IMR-90 (cell line): ENCODE measurements at regions of chr2 and their contacts with region 1.

Region 1: DNA sequence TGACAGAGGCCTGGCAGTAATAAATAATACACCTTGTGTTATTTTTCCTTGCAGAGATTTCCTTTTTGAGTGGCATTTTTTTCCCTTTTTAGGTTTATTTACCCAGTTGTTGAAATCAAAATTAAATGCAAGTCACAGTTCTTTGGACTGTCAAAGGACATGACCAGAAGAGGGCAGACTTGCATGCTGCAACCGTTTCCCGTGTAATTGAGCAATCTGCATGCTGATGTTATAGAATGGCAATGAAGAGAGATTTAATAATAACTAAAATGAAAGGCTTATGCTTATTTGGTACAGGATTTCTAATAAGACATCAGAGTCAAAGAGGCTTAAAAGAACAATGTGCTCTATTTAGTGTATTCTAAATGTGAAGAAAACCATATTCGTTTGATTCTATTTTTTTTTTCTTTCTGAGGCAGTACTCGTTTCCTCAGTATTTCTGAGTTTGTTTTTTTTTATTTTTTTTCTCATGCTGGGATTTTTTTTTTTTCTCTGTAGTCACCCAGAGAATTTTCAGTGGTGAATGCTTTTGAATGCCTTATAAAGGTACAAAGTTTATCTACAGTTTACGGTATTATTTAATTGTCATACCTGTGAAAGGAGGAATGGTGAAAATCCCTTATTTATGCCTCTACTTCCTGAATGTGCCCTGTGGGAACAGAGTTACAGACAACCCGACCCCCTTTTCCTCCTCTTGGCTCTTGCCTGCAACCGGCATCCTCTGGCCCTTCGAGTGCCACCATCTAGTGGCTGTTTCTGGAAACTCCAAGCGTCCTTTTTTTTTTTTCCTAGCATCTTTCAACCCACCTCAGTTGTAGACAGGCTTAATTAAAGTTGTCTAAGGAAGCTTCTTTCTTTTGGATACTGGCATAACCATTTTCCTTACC is 368.5 kb downstream of the LRRTM1 start:
- DNase-seq: peak; percentile 84
- ATAC-seq: peak; percentile 92
- H3K4me3 ChIP-seq: no peak overlapping the region
- H3K27ac ChIP-seq: no peak overlapping the region
- H3K4me1 ChIP-seq: no peaks in the 10 kb centered on the region
- H3K27me3 ChIP-seq: peaks cover 3% of the 10 kb centered on the region
- CTCF ChIP-seq: peak; percentile 94
- POLR2A ChIP-seq: no peak
- RAD21 ChIP-seq: peak; percentile 86

Region 2: GRCh38 chr2:80054336-80054675 is 118.3 kb after region 1 on chr2:
- CTCF ChIA-PET with region 1: no interaction called
- POLR2A ChIA-PET with region 1: no interaction called
- dilution Hi-C with region 1: no loop called
- in situ Hi-C with region 1: no loop called
- intact Hi-C with region 1: loop called (anchors 5 kb)
- DNase-seq: peak; percentile 26
- ATAC-seq: peak; percentile 82
- H3K4me3 ChIP-seq: no peak overlapping the region
- H3K27ac ChIP-seq: no peak overlapping the region
- H3K4me1 ChIP-seq: peaks cover 5% of the 10 kb centered on the region
- H3K27me3 ChIP-seq: no peaks in the 10 kb centered on the region
- CTCF ChIP-seq: no peak
- POLR2A ChIP-seq: no peak
- RAD21 ChIP-seq: no peak

Region 3: DNA sequence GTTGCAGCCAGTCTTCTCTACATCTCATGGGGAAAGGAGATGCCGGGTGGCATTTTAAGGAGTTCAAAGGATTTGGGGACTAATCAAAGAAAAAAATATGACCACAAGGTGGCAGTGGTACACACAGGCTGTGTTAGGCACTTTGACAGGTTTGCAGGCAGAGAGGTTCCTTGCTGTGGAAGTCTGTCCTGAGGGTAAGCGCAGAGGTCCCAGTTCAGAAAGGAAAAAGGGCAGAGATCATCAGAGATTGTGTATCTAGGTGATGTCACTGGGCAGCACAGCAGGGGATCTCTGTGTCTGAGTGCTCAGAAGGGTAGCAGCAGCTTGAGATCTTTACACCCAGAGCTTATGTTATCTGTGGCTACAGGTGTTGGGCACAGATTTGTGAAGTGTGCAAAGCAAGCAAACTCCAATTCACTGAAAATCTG is 137.1 kb after region 1 on chr2:
- CTCF ChIA-PET with region 1: interaction called, 3 read pairs
- POLR2A ChIA-PET with region 1: no interaction called
- dilution Hi-C with region 1: no loop called
- in situ Hi-C with region 1: no loop called
- intact Hi-C with region 1: loop called (anchors 1 kb)
- DNase-seq: peak; percentile 73
- ATAC-seq: peak; percentile 67
- H3K4me3 ChIP-seq: no peak overlapping the region
- H3K27ac ChIP-seq: no peak overlapping the region
- H3K4me1 ChIP-seq: peaks cover 6% of the 10 kb centered on the region
- H3K27me3 ChIP-seq: no peaks in the 10 kb centered on the region
- CTCF ChIP-seq: peak; percentile 83
- POLR2A ChIP-seq: no peak
- RAD21 ChIP-seq: peak; percentile 91

Region 4: GRCh38 chr2:80217446-80217845 is 281.4 kb after region 1 on chr2:
- CTCF ChIA-PET with region 1: no interaction called
- POLR2A ChIA-PET with region 1: no interaction called
- dilution Hi-C with region 1: no loop called
- in situ Hi-C with region 1: no loop called
- intact Hi-C with region 1: no loop called
- DNase-seq: no peak
- ATAC-seq: no peak
- H3K4me3 ChIP-seq: no peak overlapping the region
- H3K27ac ChIP-seq: no peak overlapping the region
- H3K4me1 ChIP-seq: no peaks in the 10 kb centered on the region
- H3K27me3 ChIP-seq: no peaks in the 10 kb centered on the region
- CTCF ChIP-seq: no peak
- POLR2A ChIP-seq: no peak
- RAD21 ChIP-seq: no peak

Region 5: GRCh38 chr2:80238692-80239469 is 302.9 kb after region 1 on chr2:
- CTCF ChIA-PET with region 1: no interaction called
- POLR2A ChIA-PET with region 1: no interaction called
- dilution Hi-C with region 1: no loop called
- in situ Hi-C with region 1: loop called (anchors 10 kb)
- intact Hi-C with region 1: loop called (anchors 1 kb)
- DNase-seq: peak; percentile 42
- ATAC-seq: peak; percentile 85
- H3K4me3 ChIP-seq: no peak overlapping the region
- H3K27ac ChIP-seq: no peak overlapping the region
- H3K4me1 ChIP-seq: no peaks in the 10 kb centered on the region
- H3K27me3 ChIP-seq: peaks cover 2% of the 10 kb centered on the region
- CTCF ChIP-seq: peak; percentile 77
- POLR2A ChIP-seq: no peak
- RAD21 ChIP-seq: peak; percentile 70

Region 6: DNA sequence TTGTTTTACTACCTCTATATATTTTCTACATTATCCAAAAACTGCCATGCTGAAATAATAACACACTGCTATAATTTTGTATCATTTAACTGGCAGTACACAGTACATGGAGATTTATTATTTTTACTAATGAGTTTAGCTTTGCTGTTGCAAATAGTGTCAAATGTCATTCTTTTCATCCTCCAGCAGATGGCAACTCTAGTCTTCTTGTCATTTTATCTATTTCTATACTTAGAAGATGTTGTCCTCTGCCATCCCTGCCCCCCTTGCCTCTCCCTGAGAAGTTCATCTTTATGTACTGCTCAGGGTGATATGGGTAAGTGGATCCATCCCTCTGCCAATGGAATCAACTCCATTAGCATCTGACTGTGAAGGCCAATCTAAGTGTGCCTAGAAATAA is 390.2 kb after region 1 on chr2:
- CTCF ChIA-PET with region 1: no interaction called
- POLR2A ChIA-PET with region 1: no interaction called
- dilution Hi-C with region 1: no loop called
- in situ Hi-C with region 1: no loop called
- intact Hi-C with region 1: loop called (anchors 10 kb)
- DNase-seq: peak; percentile 19
- ATAC-seq: 0 out of 2 replicates have a peak, but pooled peaks have one; percentile 29
- H3K4me3 ChIP-seq: no peak overlapping the region
- H3K27ac ChIP-seq: no peak overlapping the region
- H3K4me1 ChIP-seq: no peaks in the 10 kb centered on the region
- H3K27me3 ChIP-seq: peaks cover 11% of the 10 kb centered on the region
- CTCF ChIP-seq: peak; percentile 40
- POLR2A ChIP-seq: no peak
- RAD21 ChIP-seq: peak; percentile 46

Region 7: DNA sequence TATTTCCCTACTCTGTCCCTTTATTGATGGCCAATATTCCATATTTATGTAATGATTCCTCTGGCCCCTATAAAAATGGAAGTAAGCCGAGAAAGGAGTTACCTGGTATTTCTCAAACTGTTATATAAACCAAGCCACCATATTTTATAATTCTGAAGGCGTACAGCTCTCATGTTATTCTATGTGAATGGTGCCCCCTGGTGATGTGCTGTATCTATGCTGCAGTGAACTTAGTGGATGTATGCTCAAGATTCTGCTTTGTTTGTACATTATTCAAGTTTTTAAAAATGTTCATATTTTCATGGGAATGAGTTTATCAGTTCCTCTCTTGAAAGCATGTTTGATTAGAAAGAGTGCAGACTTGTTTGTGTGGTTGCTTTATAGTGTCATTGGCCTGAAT is 563.1 kb after region 1 on chr2:
- CTCF ChIA-PET with region 1: interaction called, 3 read pairs
- POLR2A ChIA-PET with region 1: no interaction called
- dilution Hi-C with region 1: no loop called
- in situ Hi-C with region 1: loop called (anchors 10 kb)
- intact Hi-C with region 1: loop called (anchors 1 kb)
- DNase-seq: peak; percentile 65
- ATAC-seq: peak; percentile 72; the same call in 1 of the 2 replicates
- H3K4me3 ChIP-seq: no peak overlapping the region
- H3K27ac ChIP-seq: no peak overlapping the region
- H3K4me1 ChIP-seq: peaks cover 4% of the 10 kb centered on the region; the same call in 1 of the 2 replicates
- H3K27me3 ChIP-seq: no peaks in the 10 kb centered on the region
- CTCF ChIP-seq: peak; percentile 78
- POLR2A ChIP-seq: no peak
- RAD21 ChIP-seq: peak; percentile 76

Region 8: GRCh38 chr2:81644189-81644588 is 1708.2 kb after region 1 on chr2:
- CTCF ChIA-PET with region 1: no interaction called
- POLR2A ChIA-PET with region 1: no interaction called
- dilution Hi-C with region 1: no loop called
- in situ Hi-C with region 1: no loop called
- intact Hi-C with region 1: no loop called
- DNase-seq: no peak
- ATAC-seq: no peak
- H3K4me3 ChIP-seq: no peak overlapping the region
- H3K27ac ChIP-seq: no peak overlapping the region
- H3K4me1 ChIP-seq: no peaks in the 10 kb centered on the region
- H3K27me3 ChIP-seq: no peaks in the 10 kb centered on the region
- CTCF ChIP-seq: no peak
- POLR2A ChIP-seq: no peak
- RAD21 ChIP-seq: no peak